ENCODE measurements at regions of chr5 and their contacts with region 1.

Region 1: DNA sequence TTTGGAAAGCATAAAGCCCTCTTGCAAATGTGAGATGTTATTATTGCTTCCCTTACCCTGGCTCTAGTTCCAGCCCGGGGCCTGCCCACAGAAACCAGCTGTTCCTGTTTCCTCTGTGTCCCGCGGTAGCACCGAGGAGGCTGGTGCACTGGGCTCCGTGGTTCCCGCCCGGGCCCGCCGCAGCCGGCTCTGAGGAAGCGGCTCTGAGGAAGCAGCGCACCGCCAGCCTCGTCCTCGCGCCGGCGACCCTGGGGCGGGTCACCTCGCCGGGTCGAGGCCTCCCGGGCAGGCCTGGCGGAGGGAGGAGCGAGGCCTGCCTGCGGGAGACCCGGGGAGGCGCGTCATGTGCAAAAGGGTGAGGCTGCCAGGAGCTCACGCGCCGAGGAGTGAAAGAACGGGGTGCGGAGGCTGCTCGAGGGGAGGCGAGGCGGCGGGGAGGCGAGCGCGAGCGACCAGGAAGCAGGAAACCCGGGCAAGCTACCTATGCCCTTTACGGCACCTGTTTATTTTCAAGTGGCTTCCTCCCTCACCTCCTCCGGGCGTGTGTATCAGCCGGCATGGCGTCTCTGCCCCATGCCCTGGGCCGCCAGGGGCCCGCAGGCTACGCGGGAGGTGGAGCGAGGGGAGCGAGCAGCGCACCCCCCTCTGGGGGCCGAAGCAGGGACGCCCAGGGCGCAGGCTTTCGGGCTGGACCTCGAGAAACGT is 61.3 kb upstream of the MEGF10 start:
- DNase-seq: peak; percentile 49
- H3K4me3 ChIP-seq: peak overlapping the region; percentile 28 to 40 (median 40)
- H3K27ac ChIP-seq: no peak overlapping the region
- H3K4me1 ChIP-seq: peaks cover 8% of the 10 kb centered on the region
- H3K27me3 ChIP-seq: no peaks in the 10 kb centered on the region
- CTCF ChIP-seq: peak in 1 of 2 donors; percentile 50
- POLR2A ChIP-seq: no peak

Region 2: DNA sequence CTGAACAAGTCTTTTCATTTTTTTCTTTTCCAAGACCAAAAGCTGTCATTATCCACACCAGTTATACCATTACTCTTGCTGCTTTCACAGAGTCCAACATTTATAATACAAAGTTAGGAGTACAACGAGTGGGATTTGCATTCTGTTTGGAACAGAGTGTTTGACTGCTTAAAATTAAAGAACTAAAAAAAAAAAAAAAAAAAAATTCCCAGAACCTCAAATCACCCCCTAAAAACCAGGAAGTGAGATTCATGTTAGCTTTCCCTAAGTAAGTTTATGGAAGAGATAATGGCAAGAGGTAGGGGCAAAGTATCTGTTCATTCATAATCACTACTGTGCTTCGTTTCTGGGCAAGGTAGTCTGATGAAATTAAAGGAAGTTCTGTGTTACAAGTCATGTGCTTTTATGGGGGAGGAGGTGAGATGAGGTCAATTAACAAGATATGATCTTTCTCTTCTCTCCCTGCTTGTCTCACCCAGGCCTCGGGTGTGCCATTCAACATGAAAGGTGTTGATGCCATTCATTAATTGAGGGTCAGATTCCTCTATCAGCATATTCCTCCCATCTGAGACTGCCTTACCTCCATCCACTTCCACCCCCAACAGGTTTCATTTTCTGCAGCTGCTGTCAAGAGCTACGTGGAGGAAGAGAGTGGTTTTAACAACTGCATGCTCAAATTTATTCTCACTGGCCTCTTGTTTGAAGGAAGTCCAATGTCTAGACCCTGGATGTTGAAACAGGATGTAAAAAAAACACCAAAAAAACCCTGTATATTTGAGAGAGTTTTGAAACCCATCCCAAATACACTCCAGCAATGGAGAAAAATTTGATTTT is 257.1 kb before region 1 on chr5:
- CTCF ChIA-PET with region 1: no interaction called
- POLR2A ChIA-PET with region 1: no interaction called
- dilution Hi-C with region 1: no loop called
- intact Hi-C with region 1: loop called (anchors 5 kb)
- DNase-seq: peak; percentile 42
- H3K4me3 ChIP-seq: no peak overlapping the region
- H3K27ac ChIP-seq: no peak overlapping the region
- H3K4me1 ChIP-seq: peaks cover 27% of the 10 kb centered on the region
- H3K27me3 ChIP-seq: no peaks in the 10 kb centered on the region
- CTCF ChIP-seq: no peak
- POLR2A ChIP-seq: no peak

Region 3: GRCh38 chr5:127072861-127073846 is 156.2 kb before region 1 on chr5 and contains the start of gene C5orf63:
- CTCF ChIA-PET with region 1: no interaction called
- POLR2A ChIA-PET with region 1: no interaction called
- dilution Hi-C with region 1: no loop called
- intact Hi-C with region 1: loop called (anchors 2 kb)
- DNase-seq: peak; percentile 45
- H3K4me3 ChIP-seq: peak within 1 kb of the TSS; percentile 32 to 69 (median 56)
- H3K27ac ChIP-seq: peak within 1 kb of the TSS; percentile 72
- H3K4me1 ChIP-seq: peaks cover 61% of the 10 kb centered on the region
- H3K27me3 ChIP-seq: no peaks in the 10 kb centered on the region
- CTCF ChIP-seq: no peak
- POLR2A ChIP-seq: peak; percentile 41
- total RNA-seq, gene C5orf63: 4.0 and 5.3 TPM in 2 replicates

Region 4: GRCh38 chr5:127206320-127207113 is 22.8 kb before region 1 on chr5:
- CTCF ChIA-PET with region 1: no interaction called
- POLR2A ChIA-PET with region 1: no interaction called
- dilution Hi-C with region 1: no loop called
- intact Hi-C with region 1: loop called (anchors 1 kb)
- DNase-seq: peak; percentile 95
- H3K4me3 ChIP-seq: no peak overlapping the region
- H3K27ac ChIP-seq: peak overlapping the region; percentile 58
- H3K4me1 ChIP-seq: peaks cover 18% of the 10 kb centered on the region
- H3K27me3 ChIP-seq: peaks cover 0 to 2% of the 10 kb centered on the region in 2 experiments
- CTCF ChIP-seq: no peak
- POLR2A ChIP-seq: no peak

Region 5: GRCh38 chr5:127290019-127290945 is 60.9 kb after region 1 on chr5 and contains the start of gene MEGF10:
- CTCF ChIA-PET with region 1: no interaction called
- POLR2A ChIA-PET with region 1: no interaction called
- dilution Hi-C with region 1: no loop called
- intact Hi-C with region 1: no loop called
- DNase-seq: peak; percentile 33
- H3K4me3 ChIP-seq: peak within 1 kb of the TSS; percentile 8 to 46 (median 28)
- H3K27ac ChIP-seq: no peak within 1 kb of the TSS
- H3K4me1 ChIP-seq: peaks cover 17% of the 10 kb centered on the region
- H3K27me3 ChIP-seq: peaks cover 26 to 47% of the 10 kb centered on the region in 2 experiments
- CTCF ChIP-seq: peak; percentile 66 to 71
- POLR2A ChIP-seq: no peak
- total RNA-seq, gene MEGF10: 0.21 and 1.00 TPM in 2 replicates